Gastrocnemius medialis (tissue), 4 donors: ENCODE measurements at regions of chr5 and their contacts with region 1.

Region 1: GRCh38 chr5:179166886-179167841 is 107.0 kb downstream of the ZNF354C start:
- DNase-seq: peak in 1 of 2 donors; percentile 12
- ATAC-seq: peak; percentile 62 to 78
- H3K4me3 ChIP-seq: peak overlapping the region in 2 of 4 donors; percentile 15 to 38
- H3K27ac ChIP-seq: no peak overlapping the region
- H3K4me1 ChIP-seq: peaks cover 0 to 4% of the 10 kb centered on the region in 2 donors
- H3K27me3 ChIP-seq: peaks cover 0 to 2% (median 0%) of the 10 kb centered on the region in 3 donors
- CTCF ChIP-seq: peak; percentile 72 to 99 (median 94)
- POLR2A ChIP-seq: no peak

Region 2: GRCh38 chr5:179345433-179346321 is 178.5 kb after region 1 on chr5 and contains the start of gene ADAMTS2:
- in situ Hi-C with region 1: no loop called
- intact Hi-C with region 1: loop called (anchors 2 kb)
- DNase-seq: peak in 1 of 2 donors; percentile 34
- ATAC-seq: peak; percentile 47 to 60
- H3K4me3 ChIP-seq: peak within 1 kb of the TSS; percentile 52 to 61 (median 56)
- H3K27ac ChIP-seq: peak within 1 kb of the TSS in 3 of 4 donors; percentile 46 to 52 (median 47)
- H3K4me1 ChIP-seq: peaks cover 7 to 12% of the 10 kb centered on the region in 2 donors
- H3K27me3 ChIP-seq: peaks cover 21 to 30% (median 22%) of the 10 kb centered on the region in 3 donors
- CTCF ChIP-seq: no peak
- POLR2A ChIP-seq: no peak
- total RNA-seq, gene ADAMTS2: 0.78 to 3.8 (median 2.0) TPM

Region 3: GRCh38 chr5:179404321-179405053 is 237.3 kb after region 1 on chr5:
- in situ Hi-C with region 1: no loop called
- intact Hi-C with region 1: loop called (anchors 5 kb)
- DNase-seq: no peak
- ATAC-seq: no peak
- H3K4me3 ChIP-seq: no peak overlapping the region
- H3K27ac ChIP-seq: no peak overlapping the region
- H3K4me1 ChIP-seq: no peaks in the 10 kb centered on the region
- H3K27me3 ChIP-seq: no peaks in the 10 kb centered on the region
- CTCF ChIP-seq: no peak
- POLR2A ChIP-seq: no peak

Region 4: DNA sequence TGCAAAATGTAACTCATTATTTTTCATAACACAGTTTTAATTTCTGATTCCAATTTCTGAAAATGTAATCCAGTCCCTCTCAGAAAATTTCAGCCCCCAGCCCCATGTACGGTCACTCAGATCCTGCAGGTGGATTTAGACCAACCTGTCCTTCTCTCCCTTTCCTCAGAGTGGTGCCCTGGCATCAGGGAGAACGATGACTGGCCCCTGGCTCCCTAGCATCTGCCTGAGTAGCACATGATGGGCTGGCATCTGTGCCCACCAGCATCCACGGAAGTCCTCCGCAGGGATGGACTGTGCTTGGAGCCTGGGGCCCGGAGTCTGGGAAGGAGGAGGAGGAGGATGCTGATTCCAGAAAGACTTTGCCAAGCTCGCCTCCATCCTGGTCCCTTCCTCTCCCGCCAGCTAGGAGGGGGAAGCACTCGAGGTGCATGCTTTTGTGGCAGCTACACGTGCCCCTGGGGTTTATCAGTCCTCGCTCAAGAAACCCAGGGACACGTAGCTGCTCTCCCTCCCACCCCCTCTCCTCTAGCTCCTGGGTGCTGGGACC is 328.8 kb after region 1 on chr5:
- in situ Hi-C with region 1: loop called (anchors 5 to 10 kb)
- intact Hi-C with region 1: loop called (anchors 1 kb)
- DNase-seq: no peak
- ATAC-seq: no peak
- H3K4me3 ChIP-seq: no peak overlapping the region
- H3K27ac ChIP-seq: no peak overlapping the region
- H3K4me1 ChIP-seq: no peaks in the 10 kb centered on the region
- H3K27me3 ChIP-seq: no peaks in the 10 kb centered on the region
- CTCF ChIP-seq: no peak
- POLR2A ChIP-seq: no peak